HAP-1 (cell line): ENCODE measurements at regions of chr10 and their contacts with region 1.

Region 1: GRCh38 chr10:49592726-49593563 is 17.2 kb upstream of the SLC18A3 start:
- DNase-seq: peak; percentile 41 to 84
- H3K4me3 ChIP-seq: no peak overlapping the region
- H3K4me1 ChIP-seq: no peaks in the 10 kb centered on the region
- H3K27me3 ChIP-seq: no peaks in the 10 kb centered on the region

Region 2: GRCh38 chr10:50063100-50063499 is 470.2 kb after region 1 on chr10:
- in situ Hi-C with region 1: loop called (anchors 25 kb)
- DNase-seq: no peak
- H3K4me3 ChIP-seq: no peak overlapping the region
- H3K4me1 ChIP-seq: no peaks in the 10 kb centered on the region
- H3K27me3 ChIP-seq: no peaks in the 10 kb centered on the region

Region 3: DNA sequence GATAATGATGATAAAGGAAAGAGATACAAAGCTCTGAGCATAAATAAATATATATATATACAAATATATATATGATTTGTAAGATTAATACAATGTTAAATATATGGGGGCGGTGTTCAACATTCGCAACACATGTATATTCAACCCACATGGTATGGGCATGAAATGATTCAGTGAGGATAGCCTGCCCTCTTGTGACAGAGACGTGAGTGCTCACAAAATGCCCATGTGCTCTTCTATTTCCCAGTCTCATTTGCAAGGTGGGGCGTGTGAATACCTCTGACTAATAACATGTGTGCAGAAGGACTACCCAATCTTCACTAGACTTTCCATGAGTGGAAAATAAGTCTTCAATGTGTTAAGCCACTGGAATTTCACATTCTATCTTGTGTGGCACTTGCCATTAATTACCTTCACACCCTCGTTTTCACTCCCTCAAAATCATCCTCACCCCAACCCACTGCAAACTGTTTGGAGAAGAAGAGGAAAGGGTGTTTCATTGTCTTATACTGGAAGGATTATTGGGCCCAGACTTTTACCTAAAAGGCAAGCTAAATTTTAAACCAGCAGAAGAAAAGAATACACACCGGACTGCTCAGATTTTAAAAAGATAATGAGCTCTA is 631.5 kb after region 1 on chr10:
- in situ Hi-C with region 1: loop called (anchors 10 kb)
- DNase-seq: peak; percentile 36 to 47
- H3K4me3 ChIP-seq: no peak overlapping the region
- H3K4me1 ChIP-seq: no peaks in the 10 kb centered on the region
- H3K27me3 ChIP-seq: peaks cover 7% of the 10 kb centered on the region